ENCODE measurements at regions of chr11 and their contacts with region 1.

Region 1: GRCh38 chr11:12888525-12889158 is 120.5 kb upstream of the RASSF10 start:
- DNase-seq: peak; percentile 75
- ATAC-seq: peak; percentile 60
- H3K4me3 Mint-ChIP-seq: no peak overlapping the region
- H3K27ac Mint-ChIP-seq: no peak overlapping the region
- H3K4me1 Mint-ChIP-seq: no peaks in the 10 kb centered on the region
- H3K27me3 Mint-ChIP-seq: peaks cover 3% of the 10 kb centered on the region

Region 2: DNA sequence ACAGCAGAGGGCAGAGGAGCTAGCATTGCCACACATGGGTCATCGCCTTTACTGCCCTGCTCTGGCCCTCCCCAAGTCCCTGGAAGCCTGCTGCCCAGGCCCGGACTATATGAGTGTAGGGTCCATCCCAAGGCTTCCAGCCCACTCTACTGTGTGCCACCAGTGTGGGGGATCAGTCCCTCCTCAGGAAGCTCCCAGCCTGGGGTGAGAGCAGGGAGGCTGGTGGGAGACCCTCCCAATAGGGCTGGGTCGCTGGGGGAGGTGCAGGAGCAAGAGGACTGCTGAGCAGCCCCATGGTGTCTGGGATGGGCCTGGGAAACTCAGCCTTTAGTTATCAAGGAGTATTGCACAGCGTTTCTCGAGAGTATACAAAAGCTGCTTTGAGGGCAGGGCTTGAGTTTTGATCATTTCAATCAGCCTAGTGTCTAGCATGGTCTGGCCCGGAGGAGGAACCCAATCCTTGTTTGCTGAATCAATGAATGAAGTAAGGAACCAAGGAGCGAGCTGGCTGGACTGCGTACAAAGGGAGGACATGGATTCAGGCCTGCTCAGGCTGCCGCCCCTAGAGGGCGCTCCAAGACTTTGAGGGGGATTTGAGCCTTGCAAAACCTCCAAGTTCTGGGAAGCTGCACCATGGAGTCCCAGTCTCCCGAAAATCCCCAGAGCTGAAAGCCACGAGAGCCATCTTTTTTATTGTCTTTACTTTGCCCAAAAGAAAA is 600.3 kb before region 1 on chr11:
- CTCF ChIA-PET with region 1: interaction called, 11 read pairs
- POLR2A ChIA-PET with region 1: no interaction called
- DNase-seq: peak; percentile 66
- ATAC-seq: peak; percentile 42
- H3K4me3 Mint-ChIP-seq: no peak overlapping the region
- H3K27ac Mint-ChIP-seq: no peak overlapping the region
- H3K4me1 Mint-ChIP-seq: peaks cover 18% of the 10 kb centered on the region
- H3K27me3 Mint-ChIP-seq: no peaks in the 10 kb centered on the region

Region 3: DNA sequence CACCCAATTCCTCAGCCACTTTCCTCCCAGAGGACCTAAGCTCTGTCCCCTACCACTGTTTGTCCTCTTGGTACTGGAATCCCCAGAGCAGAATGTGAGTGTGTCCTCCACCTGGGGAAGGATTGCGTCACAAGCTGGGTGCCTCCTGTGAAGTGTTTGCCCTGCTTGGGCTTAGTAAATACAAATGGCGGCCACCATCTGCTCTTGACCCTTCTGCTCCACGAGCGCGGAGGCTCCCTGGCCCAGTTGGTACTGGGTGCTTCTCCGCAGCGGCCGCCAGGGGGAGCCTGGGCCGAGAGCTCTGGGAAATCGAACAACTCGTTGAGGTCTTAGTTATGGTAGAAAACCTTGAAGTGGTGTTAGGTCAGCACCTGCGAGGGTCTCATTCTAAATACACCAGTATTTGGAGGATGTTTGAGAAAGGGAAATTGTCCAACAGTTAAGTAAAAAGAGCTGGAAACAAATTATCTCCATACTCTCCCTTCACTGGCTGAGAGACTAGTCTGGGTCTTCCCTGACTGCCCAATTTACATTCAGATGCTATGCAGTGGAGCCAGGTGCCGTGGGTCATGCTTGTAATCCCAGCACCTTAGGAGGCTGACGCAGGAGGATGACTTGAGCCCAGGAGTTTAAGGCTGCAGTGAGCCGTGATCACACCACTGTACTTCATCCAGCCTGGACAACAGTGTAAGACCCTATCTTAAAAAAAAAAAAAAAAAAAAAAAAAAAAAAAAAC is 289.1 kb before region 1 on chr11:
- CTCF ChIA-PET with region 1: interaction called, 45 read pairs
- POLR2A ChIA-PET with region 1: no interaction called
- DNase-seq: peak; percentile 52
- ATAC-seq: peak; percentile 67
- H3K4me3 Mint-ChIP-seq: no peak overlapping the region
- H3K27ac Mint-ChIP-seq: no peak overlapping the region
- H3K4me1 Mint-ChIP-seq: peaks cover 7% of the 10 kb centered on the region
- H3K27me3 Mint-ChIP-seq: peaks cover 9% of the 10 kb centered on the region

Measured in activated CD8-positive, alpha-beta T cell treated with anti-CD3 and anti-CD28 coated beads, Interleukin-2, amount 10 ng/mL, durations not matched to agents 7 days and 5 days (primary cell).